GM12878 (cell line): ENCODE measurements at regions of chr20 and their contacts with region 1.

Region 1: GRCh38 chr20:52972190-52972937 is at the start of gene TSHZ2:
- DNase-seq: no peak
- ATAC-seq: peak; percentile 35
- H3K4me3 ChIP-seq: no peak within 1 kb of the TSS
- H3K27ac ChIP-seq: no peak within 1 kb of the TSS
- H3K4me1 ChIP-seq: no peaks in the 10 kb centered on the region
- H3K27me3 ChIP-seq: peaks cover 1 to 11% of the 10 kb centered on the region in 2 experiments; a peak in 3 of 4 replicates
- CTCF ChIP-seq: no peak
- EP300 ChIP-seq: no peak
- POLR2A ChIP-seq: no peak
- RAD21 ChIP-seq: no peak
- polyA plus RNA-seq, gene TSHZ2: not detected

Region 2: DNA sequence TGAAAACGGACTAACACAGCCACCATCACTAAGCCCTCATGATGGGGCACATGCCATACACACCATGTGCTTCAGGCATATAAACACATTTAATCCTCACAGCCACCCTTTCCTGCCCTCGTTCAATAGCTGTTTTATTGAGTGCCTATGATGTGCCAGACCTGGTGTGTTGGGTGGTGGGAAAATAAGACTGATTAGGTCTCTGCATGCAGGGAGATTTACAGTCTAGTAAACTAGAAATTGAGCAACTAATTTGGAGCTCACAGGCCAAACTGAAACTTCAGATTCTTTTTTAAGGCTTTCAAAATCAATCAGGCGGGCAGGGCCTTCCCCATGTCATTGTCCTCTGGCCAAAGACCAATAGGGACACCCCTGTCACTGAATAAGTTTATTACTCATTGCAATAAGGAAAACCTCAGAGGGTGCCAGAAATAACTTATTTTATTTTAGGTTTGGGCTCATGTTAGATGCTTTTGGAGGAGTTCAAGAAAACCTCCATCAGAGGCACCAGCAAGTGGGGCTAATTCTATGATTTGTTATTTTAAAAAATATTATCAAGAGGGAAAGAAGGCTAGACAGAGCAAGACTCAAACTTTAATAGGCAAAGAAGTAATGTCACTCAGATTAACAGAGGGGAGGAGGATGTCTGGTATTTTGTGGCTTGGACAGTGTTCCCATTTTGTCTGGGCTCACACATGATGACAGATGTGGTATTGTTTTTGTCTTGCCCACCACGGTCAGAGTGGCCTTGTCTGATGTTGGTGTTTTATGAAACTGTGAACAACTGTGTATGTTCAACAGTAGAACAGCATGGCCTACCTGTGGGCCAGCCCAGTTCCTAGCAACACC is 792.8 kb before region 1 on chr20:
- CTCF ChIA-PET with region 1: no interaction called
- POLR2A ChIA-PET with region 1: no interaction called
- RAD21 ChIA-PET with region 1: no interaction called
- SMC1A ChIA-PET with region 1: no interaction called
- in situ Hi-C with region 1: no loop called
- intact Hi-C with region 1: no loop called
- DNase-seq: peak; percentile 94
- ATAC-seq: peak; percentile 93
- H3K4me3 ChIP-seq: peak overlapping the region; percentile 1; the same call in 1 of the 2 replicates
- H3K27ac ChIP-seq: peak overlapping the region; percentile 93
- H3K4me1 ChIP-seq: peaks cover 40% of the 10 kb centered on the region
- H3K27me3 ChIP-seq: no peaks in the 10 kb centered on the region
- CTCF ChIP-seq: no peak
- EP300 ChIP-seq: peak in 1 of 2 experiments; percentile 79; a peak in 3 of 4 replicates
- POLR2A ChIP-seq: peak; percentile 65
- RAD21 ChIP-seq: no peak

Region 3: DNA sequence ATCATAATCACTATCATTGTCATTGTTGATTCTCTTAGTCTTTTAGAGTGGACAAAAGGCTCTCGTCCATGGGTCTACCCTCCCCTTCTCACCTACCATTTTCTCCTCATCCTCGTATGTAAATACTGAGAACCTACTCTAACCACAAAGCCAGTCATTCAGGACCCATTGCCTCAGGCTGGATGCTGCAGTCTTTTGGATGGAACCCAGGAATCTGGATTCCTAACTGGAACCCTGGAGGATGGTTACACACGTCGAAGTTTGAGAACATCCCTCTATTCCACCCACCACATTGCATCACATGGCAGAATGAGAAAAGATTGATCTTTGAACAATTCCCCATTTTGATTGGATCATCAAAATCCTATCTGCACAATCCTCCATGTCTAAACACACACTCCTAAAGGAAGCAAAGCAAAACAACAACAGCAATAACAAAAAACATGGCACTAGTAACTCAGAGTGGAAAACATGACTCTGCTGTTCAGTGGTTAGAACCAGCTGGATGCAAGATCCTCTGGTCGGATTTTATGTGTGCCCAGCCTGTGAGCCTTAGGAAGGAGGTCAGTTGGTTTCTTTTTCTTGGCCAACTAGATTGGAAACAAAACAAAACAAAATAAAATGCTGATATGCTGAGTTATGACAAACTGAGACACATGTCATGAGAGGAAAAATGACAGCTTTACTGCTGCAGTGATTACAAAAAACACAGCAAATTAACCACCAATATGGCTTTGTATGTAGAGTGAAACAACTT is 37.8 kb after region 1 on chr20:
- CTCF ChIA-PET with region 1: no interaction called
- POLR2A ChIA-PET with region 1: no interaction called
- RAD21 ChIA-PET with region 1: no interaction called
- SMC1A ChIA-PET with region 1: interaction called, 14 read pairs
- in situ Hi-C with region 1: no loop called
- intact Hi-C with region 1: no loop called
- DNase-seq: no peak
- ATAC-seq: no peak
- H3K4me3 ChIP-seq: no peak overlapping the region
- H3K27ac ChIP-seq: no peak overlapping the region
- H3K4me1 ChIP-seq: no peaks in the 10 kb centered on the region
- H3K27me3 ChIP-seq: no peaks in the 10 kb centered on the region
- CTCF ChIP-seq: no peak
- EP300 ChIP-seq: no peak
- POLR2A ChIP-seq: no peak
- RAD21 ChIP-seq: no peak

Region 4: DNA sequence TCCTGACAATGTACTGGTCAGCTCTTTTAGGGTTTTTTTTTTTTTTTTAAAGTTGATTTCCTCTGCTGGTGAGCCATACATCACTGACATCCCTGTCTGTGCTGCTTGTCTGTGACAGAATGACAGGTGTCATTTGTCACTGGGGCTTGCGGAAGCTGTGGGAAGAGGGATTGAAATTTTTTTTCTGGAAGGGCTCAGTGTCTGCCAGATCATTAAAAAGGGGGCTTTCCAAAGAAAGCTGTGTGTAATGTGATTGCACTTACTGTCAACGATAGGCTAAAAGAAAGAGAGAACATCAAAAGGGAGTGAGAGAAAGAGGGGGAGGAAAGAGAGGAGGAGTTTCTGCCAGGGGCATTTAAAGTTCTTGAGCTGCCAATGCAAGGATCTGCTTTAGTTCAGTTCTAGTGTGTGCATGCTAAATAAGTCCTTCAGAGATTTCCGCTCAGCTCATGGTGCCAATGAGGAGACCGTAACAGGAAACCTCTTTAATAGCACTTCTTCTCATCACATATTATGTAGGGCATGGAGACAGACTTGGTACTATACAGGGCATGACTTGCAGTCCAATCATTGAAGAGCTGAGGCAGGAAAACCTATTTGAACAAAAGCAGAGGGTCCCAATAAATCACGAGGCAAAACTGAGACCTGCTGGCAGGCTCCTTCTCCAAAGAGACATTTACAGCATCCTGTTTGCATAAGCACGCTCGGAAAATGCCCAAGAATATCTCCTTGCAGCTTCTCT is 177.0 kb after region 1 on chr20:
- CTCF ChIA-PET with region 1: no interaction called
- POLR2A ChIA-PET with region 1: interaction called, 3 read pairs
- RAD21 ChIA-PET with region 1: interaction called, 3 read pairs
- SMC1A ChIA-PET with region 1: no interaction called
- in situ Hi-C with region 1: no loop called
- intact Hi-C with region 1: loop called (anchors 5 kb)
- DNase-seq: no peak
- ATAC-seq: no peak; the same call in 2 of the 3 replicates
- H3K4me3 ChIP-seq: no peak overlapping the region
- H3K27ac ChIP-seq: no peak overlapping the region
- H3K4me1 ChIP-seq: no peaks in the 10 kb centered on the region; the same call in 1 of the 2 replicates
- H3K27me3 ChIP-seq: no peaks in the 10 kb centered on the region
- CTCF ChIP-seq: no peak
- EP300 ChIP-seq: no peak
- POLR2A ChIP-seq: no peak
- RAD21 ChIP-seq: no peak